Activated CD4-positive, alpha-beta memory T cell treated with anti-CD3 and anti-CD28 coated beads, Interleukin-2, amount 10 ng/mL, durations not matched to agents 7 days and 5 days (primary cell): ENCODE measurements at regions of chr5 and their contacts with region 1.

Region 1: DNA sequence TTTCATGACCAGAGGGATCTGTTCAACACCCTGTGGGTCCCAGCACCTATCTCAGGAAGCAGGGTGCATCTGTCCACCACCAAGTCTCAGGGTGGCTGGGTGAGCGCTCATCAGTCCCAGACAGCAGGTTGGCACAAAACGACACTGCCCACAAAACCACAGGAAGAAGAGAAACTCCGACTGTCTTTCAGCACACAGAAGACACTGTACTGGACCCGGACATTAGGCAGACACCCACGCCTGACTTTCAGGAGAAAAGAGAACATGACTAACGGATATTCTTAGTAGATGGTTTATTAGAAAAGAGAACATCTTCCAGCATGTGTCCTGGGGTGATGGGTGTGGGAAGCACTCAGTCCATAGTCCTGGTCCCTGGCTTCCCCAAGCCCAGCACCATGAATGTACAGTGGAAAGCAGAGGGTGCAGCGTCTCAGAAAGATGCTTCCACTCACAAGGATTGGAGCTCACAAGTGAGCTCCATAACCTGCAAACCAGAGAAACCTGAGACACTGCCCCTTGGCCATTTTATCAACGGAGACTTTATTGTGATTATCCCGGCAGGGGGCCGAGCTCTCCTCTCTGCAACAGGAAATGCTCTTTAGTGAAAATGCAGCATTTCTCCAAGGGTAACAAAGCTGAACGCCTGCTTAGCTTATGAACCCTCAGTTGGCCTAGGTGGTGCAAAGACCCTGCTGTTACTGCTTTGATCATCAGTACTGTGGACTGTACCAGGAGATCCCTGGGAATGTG is 35.8 kb upstream of the LCP2 start:
- DNase-seq: peak; percentile 79
- H3K4me3 Mint-ChIP-seq: peak overlapping the region; percentile 64
- H3K27ac Mint-ChIP-seq: peak overlapping the region; percentile 72
- H3K4me1 Mint-ChIP-seq: peaks cover 26% of the 10 kb centered on the region
- H3K27me3 Mint-ChIP-seq: no peaks in the 10 kb centered on the region

Region 2: GRCh38 chr5:170200876-170201275 is 132.5 kb before region 1 on chr5:
- CTCF ChIA-PET with region 1: no interaction called
- POLR2A ChIA-PET with region 1: no interaction called
- DNase-seq: no peak
- H3K4me3 Mint-ChIP-seq: no peak overlapping the region
- H3K27ac Mint-ChIP-seq: no peak overlapping the region
- H3K4me1 Mint-ChIP-seq: no peaks in the 10 kb centered on the region
- H3K27me3 Mint-ChIP-seq: peaks cover 27% of the 10 kb centered on the region

Region 3: GRCh38 chr5:170278611-170279452 is 54.5 kb before region 1 on chr5:
- CTCF ChIA-PET with region 1: interaction called, 109 read pairs
- POLR2A ChIA-PET with region 1: interaction called, 290 read pairs
- DNase-seq: peak; percentile 94
- H3K4me3 Mint-ChIP-seq: peak overlapping the region; percentile 69
- H3K27ac Mint-ChIP-seq: peak overlapping the region; percentile 97
- H3K4me1 Mint-ChIP-seq: peaks cover 97% of the 10 kb centered on the region
- H3K27me3 Mint-ChIP-seq: no peaks in the 10 kb centered on the region

Region 4: DNA sequence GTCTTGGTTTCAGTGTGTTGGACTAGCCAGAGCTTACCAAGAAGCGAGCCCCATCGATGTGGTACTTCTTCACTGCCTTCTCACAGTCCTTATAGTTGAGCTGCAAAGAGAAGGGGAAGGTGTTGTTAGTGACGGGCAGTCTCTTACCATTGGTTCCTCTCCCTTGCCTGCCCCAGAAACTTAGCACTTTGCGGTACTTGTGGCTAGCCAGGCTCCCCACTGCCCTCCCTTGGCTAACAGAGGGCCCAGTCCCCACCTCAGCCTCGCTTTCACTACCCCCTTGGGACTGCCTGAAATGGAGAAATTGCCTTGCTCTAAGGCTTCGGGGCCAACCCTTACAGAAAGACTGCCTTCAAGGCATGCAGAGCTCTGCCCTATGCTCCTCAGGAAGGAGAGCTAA is 40.1 kb before region 1 on chr5:
- CTCF ChIA-PET with region 1: interaction called, 76 read pairs
- POLR2A ChIA-PET with region 1: interaction called, 375 read pairs
- DNase-seq: peak; percentile 80
- H3K4me3 Mint-ChIP-seq: peak overlapping the region; percentile 99
- H3K27ac Mint-ChIP-seq: peak overlapping the region; percentile 96
- H3K4me1 Mint-ChIP-seq: peaks cover 70% of the 10 kb centered on the region
- H3K27me3 Mint-ChIP-seq: no peaks in the 10 kb centered on the region

Region 5: DNA sequence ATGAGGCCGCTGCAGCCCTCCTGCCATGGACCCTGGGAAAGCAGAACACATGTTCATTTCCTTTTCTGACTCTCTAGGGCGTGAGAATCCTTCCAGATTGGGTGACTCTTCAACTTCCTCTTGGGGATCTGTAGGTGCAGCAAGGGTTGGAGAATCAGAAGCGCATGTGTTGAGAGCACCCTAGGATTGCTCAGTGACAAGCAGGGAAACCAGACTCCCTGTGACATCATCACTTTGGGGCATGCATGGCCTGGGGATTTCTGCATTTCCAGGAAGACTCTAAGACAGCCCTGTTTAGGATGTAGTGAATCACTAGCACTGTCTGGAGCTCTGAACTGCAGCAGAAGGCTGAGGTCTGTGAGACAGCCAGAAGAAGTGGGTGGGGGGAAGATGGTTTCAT is 20.7 kb before region 1 on chr5:
- CTCF ChIA-PET with region 1: interaction called, 14 read pairs
- POLR2A ChIA-PET with region 1: interaction called, 37 read pairs
- DNase-seq: peak; percentile 56
- H3K4me3 Mint-ChIP-seq: peak overlapping the region; percentile 52
- H3K27ac Mint-ChIP-seq: peak overlapping the region; percentile 79
- H3K4me1 Mint-ChIP-seq: peaks cover 30% of the 10 kb centered on the region
- H3K27me3 Mint-ChIP-seq: peaks cover 2% of the 10 kb centered on the region